HEK293T (cell line): ENCODE measurements at regions of chr6 and their contacts with region 1.

Region 1: DNA sequence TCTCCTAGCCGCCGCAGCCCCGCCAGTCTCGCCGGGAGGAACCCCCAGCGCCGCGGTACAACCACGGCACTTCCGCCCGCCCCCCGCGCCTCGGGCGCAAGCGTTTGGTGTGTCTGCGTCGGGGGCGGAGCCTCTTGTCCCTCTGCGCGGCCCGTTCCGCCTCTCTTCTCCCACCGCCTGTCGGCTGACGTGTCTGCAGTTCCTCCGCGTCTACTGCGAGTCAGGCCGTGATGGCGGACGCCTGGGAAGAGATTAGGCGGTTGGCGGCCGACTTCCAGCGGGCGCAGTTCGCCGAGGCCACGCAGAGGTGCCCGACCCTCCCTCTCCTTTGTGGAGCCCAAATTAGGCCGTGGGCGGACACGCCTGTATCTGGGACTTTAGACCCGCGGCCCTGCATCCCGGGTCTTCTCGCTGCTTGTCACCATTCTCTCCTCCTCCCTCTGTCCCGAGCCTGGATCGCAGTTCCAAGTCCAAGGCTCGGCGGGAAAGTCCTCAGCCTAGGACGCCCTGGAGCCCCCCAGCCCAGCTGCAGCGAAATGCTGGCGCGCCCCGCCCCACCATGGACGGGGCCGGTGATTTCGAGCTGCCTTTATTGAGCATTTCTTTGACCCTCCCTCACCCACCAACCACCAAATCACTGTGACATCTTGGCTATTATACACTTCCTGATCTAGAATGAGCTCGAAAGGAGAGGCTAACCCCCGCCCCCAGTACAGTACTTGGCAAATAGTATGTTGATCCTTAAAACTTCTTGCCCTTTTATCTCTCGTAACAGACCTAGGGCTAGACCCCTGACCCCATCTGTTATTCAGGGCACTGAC is at the start of gene UFL1:
- DNase-seq: peak; percentile 87

Region 2: GRCh38 chr6:96532399-96532798 is 10.5 kb after region 1 on chr6:
- CTCF ChIA-PET with region 1: no interaction called
- POLR2A ChIA-PET with region 1: interaction called, 11 read pairs
- DNase-seq: no peak